Activated CD8-positive, alpha-beta T cell treated with anti-CD3 and anti-CD28 coated beads for 36 hours (primary cell): ENCODE measurements at regions of chr20 and their contacts with region 1.

Region 1: GRCh38 chr20:5109276-5109675 is 10.5 kb downstream of the PCNA start:
- DNase-seq: no peak
- ATAC-seq: no peak
- H3K4me3 Mint-ChIP-seq: no peak overlapping the region
- H3K27ac Mint-ChIP-seq: no peak overlapping the region
- H3K4me1 Mint-ChIP-seq: peaks cover 14% of the 10 kb centered on the region
- H3K27me3 Mint-ChIP-seq: no peaks in the 10 kb centered on the region
- CTCF ChIP-seq: no peak

Region 2: DNA sequence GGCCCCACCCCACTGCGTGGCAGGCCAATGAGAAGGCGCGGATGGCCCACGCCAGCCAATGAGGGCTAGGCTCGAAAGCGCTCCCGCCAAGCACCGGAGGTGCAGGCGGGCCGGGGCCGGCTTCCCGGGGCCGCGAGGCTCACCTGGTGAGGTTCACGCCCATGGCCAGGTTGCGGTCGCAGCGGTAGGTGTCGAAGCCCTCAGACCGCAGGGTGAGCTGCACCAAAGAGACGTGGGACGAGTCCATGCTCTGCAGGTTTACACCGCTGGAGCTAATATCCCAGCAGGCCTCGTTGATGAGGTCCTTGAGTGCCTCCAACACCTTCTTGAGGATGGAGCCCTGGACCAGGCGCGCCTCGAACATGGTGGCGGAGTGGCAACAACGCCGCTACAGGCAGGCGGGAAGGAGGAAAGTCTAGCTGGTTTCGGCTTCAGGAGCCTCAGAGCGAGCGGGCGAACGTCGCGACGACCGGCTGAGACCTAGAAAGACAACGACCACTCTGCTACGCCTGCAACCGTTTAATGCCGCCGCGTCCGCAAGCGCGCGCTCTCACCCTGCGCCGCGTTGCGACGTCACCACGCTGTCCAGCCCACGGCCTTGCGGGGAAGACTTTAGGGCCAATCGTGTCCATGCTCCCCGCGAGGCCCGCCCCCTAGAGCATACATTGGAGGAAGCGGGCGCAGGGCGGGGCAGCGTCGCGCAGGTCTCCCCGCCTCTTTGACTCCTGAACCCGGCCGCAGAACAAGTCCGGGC is 10.3 kb after region 1 on chr20 and contains the start of gene PCNA:
- CTCF ChIA-PET with region 1: interaction called, 3 read pairs
- POLR2A ChIA-PET with region 1: interaction called, 13 read pairs
- intact Hi-C with region 1: no loop called
- DNase-seq: peak; percentile 99
- ATAC-seq: peak; percentile 92
- H3K4me3 Mint-ChIP-seq: peak within 1 kb of the TSS; percentile 90
- H3K27ac Mint-ChIP-seq: peak within 1 kb of the TSS; percentile 94
- H3K4me1 Mint-ChIP-seq: peaks cover 39% of the 10 kb centered on the region
- H3K27me3 Mint-ChIP-seq: no peaks in the 10 kb centered on the region
- CTCF ChIP-seq: no peak
- total RNA-seq, gene PCNA: 600 to 627 TPM